PC-9 (cell line): ENCODE measurements at regions of chr11 and their contacts with region 1.

Region 1: GRCh38 chr11:121591405-121592033 is 138.8 kb upstream of the SORL1-AS1 start:
- DNase-seq: peak in 1 of 2 experiments; percentile 61
- H3K4me3 ChIP-seq: no peak overlapping the region
- H3K27ac ChIP-seq: no peak overlapping the region
- H3K4me1 ChIP-seq: peaks cover 9% of the 10 kb centered on the region
- H3K27me3 ChIP-seq: peaks cover 42% of the 10 kb centered on the region; the same call in 1 of the 2 replicates
- CTCF ChIP-seq: peak; percentile 93

Region 2: DNA sequence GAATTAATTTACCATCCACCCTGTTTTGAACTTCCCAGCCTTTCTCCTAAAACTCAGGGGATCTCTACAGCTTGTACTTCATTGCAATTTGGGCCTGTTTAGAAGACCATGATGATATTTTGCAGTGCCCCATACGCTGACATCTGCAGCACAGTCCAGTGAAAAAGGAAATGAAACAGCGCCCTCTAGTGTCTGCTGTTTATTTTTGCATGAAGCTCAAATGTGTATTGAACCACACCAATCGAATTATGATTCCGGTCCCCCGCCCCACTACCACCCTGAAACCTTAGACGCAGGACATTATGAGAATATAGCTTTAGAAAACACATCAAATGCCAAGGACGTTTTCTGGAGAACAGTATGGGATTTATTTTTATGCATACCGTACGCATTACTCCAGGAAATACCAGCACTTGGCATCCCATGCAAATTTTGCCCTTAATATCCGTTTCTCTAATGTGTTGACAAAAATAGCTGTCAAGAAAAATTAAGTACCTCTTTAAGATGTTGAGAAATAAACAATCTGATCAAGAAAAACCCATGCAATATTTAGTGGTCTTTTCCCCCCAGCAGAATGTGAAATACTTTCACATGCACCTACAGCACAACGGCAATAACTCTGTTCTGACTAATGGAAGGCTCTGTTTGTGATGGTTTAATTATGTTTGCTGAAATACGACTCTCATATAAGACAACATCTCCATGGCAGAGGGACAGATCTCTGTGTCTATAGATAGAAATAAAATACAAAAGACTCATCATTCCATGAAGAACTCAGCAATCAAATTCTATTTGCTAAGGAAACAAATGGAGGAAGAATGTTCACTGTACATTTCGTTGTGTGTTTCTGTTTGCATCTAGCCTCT is 396.6 kb before region 1 on chr11:
- CTCF ChIA-PET with region 1: no interaction called
- POLR2A ChIA-PET with region 1: no interaction called
- intact Hi-C with region 1: loop called (anchors 2 kb)
- DNase-seq: peak in 1 of 2 experiments; percentile 29
- H3K4me3 ChIP-seq: no peak overlapping the region
- H3K27ac ChIP-seq: no peak overlapping the region
- H3K4me1 ChIP-seq: no peaks in the 10 kb centered on the region
- H3K27me3 ChIP-seq: peaks cover 97% of the 10 kb centered on the region
- CTCF ChIP-seq: peak; percentile 97

Region 3: DNA sequence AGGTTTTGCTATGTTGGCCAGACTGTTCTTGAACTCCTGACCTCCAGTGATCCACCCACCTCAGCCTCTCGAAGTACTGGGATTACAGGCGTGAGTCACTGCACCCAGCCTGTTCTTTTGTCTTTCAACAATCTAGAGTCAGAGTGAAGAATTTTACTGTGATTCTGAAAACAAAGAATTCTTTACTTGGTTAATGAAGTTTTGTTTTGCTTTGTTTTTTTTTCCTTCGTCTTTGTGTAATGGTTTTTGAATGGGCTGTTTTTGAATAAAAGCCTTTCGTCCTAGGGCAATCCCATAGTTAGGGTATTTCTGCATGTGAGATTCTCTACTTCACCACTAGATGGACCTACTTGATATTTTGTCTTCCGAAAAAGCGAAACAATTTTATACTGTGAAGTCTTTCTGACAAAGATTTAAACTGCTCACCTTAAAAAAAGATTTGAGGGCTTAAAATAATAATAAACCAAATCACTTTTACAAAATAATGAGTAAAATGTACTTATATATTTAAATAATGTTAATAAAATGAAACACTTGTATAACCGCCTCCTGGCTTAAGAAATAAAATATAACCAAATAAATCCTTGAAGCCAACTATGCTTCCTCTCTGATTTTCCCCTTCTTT is 342.4 kb before region 1 on chr11:
- CTCF ChIA-PET with region 1: interaction called, 3 read pairs
- POLR2A ChIA-PET with region 1: no interaction called
- intact Hi-C with region 1: loop called (anchors 1 kb)
- DNase-seq: peak in 1 of 2 experiments; percentile 59
- H3K4me3 ChIP-seq: no peak overlapping the region
- H3K27ac ChIP-seq: no peak overlapping the region
- H3K4me1 ChIP-seq: peaks cover 7% of the 10 kb centered on the region; the same call in 1 of the 2 replicates
- H3K27me3 ChIP-seq: peaks cover 5% of the 10 kb centered on the region
- CTCF ChIP-seq: peak; percentile 85

Region 4: DNA sequence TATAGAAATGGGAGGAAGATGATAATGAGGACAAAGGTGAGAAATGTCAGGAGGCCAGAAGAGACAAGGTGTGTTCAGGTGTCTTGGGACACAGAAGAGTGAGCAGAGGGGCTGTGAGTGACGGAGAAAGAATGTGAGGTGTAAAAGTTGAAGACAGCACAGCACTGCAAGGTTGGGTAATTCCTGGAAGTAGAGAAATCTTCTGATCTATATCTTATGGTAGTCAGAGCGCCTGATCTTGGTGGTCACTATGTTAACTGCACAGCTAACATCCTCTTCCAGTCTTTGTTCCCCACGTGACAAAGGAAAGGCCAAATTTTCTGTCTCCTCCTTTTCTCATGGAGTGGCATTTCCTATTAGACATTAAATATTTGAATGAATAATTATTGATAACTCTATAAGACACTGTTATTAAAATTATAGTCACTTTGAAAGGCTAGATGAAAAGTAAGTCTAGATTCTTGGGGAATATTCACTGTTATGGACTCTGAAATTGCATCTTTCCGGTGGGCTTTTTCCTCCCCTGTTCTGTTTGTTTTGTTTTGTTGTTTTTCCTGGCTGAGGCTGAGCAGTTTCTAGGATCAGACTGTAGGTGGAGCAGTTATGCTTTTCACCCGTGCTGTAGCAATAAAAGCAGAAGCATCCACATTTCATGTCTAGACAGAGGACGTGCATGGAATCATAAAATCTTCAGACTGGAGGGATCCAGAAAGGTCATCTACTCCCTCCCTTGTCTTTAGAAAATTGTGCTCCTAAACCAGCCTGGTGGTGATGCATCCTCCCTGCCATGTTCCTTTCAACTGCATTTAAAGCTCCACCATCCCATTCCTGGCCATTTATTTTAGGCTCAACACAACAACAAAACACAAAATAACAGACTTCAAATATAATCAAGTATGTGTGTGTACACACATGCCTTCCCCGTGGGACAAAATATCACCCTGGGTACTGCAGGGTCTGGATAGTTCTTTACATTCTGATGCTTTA is 272.4 kb before region 1 on chr11:
- CTCF ChIA-PET with region 1: no interaction called
- POLR2A ChIA-PET with region 1: no interaction called
- intact Hi-C with region 1: loop called (anchors 1 kb)
- DNase-seq: peak in 1 of 2 experiments; percentile 2
- H3K4me3 ChIP-seq: no peak overlapping the region
- H3K27ac ChIP-seq: no peak overlapping the region
- H3K4me1 ChIP-seq: no peaks in the 10 kb centered on the region
- H3K27me3 ChIP-seq: peaks cover 58% of the 10 kb centered on the region
- CTCF ChIP-seq: peak; percentile 85

Region 5: DNA sequence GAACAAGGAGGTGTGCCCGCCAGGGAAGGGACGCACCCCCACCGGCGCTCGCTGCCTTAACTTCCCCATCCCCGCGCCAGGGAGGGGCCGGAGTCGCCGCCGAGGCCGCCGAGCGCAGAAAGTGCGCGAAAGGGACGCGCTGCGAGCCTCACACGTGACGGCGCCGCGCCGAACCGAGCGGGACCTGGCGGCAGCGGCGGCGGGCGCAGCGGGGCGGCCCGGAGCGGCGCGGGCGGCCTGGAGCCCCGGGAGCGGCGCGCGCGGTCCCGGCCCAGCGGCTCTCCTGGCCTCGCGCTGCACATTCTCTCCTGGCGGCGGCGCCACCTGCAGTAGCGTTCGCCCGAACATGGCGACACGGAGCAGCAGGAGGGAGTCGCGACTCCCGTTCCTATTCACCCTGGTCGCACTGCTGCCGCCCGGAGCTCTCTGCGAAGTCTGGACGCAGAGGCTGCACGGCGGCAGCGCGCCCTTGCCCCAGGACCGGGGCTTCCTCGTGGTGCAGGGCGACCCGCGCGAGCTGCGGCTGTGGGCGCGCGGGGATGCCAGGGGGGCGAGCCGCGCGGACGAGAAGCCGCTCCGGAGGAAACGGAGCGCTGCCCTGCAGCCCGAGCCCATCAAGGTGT is 139.4 kb before region 1 on chr11 and contains the start of gene SORL1:
- CTCF ChIA-PET with region 1: no interaction called
- POLR2A ChIA-PET with region 1: no interaction called
- intact Hi-C with region 1: loop called (anchors 2 kb)
- DNase-seq: peak in 1 of 2 experiments; percentile 61
- H3K4me3 ChIP-seq: peak within 1 kb of the TSS; percentile 48; the same call in 1 of the 2 replicates
- H3K27ac ChIP-seq: no peak within 1 kb of the TSS
- H3K4me1 ChIP-seq: peaks cover 14% of the 10 kb centered on the region
- H3K27me3 ChIP-seq: no peaks in the 10 kb centered on the region
- CTCF ChIP-seq: peak; percentile 31; the same call in 1 of the 2 replicates
- total RNA-seq, gene SORL1: 4.9 and 6.4 TPM in 2 replicates